Activated CD4-positive, alpha-beta T cell treated with anti-CD3 and anti-CD28 coated beads for 36 hours (primary cell): ENCODE measurements at regions of chr1 and their contacts with region 1.

Region 1: DNA sequence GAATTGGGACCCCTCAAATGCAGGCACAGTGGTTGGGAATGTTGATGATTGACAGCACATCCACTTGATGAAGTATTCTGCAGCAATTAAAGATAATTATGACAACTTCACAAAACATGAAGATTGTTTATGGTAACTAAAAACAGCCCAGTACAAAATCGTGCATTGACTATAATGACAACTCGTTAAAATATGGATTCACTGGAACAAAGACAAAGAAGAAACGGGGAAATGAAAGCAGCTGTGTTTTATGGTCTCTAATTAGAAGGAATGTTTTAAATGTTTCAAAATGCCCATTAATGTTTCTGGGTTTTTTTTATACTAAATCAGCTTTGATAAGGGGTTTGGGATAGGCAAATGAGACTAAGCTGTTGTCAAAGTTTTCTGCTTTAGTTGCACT is 36.1 kb downstream of the NIPAL3 start:
- DNase-seq: no peak
- ATAC-seq: no peak
- H3K4me3 Mint-ChIP-seq: no peak overlapping the region
- H3K27ac Mint-ChIP-seq: no peak overlapping the region
- H3K4me1 Mint-ChIP-seq: peaks cover 7% of the 10 kb centered on the region
- H3K27me3 Mint-ChIP-seq: no peaks in the 10 kb centered on the region

Region 2: DNA sequence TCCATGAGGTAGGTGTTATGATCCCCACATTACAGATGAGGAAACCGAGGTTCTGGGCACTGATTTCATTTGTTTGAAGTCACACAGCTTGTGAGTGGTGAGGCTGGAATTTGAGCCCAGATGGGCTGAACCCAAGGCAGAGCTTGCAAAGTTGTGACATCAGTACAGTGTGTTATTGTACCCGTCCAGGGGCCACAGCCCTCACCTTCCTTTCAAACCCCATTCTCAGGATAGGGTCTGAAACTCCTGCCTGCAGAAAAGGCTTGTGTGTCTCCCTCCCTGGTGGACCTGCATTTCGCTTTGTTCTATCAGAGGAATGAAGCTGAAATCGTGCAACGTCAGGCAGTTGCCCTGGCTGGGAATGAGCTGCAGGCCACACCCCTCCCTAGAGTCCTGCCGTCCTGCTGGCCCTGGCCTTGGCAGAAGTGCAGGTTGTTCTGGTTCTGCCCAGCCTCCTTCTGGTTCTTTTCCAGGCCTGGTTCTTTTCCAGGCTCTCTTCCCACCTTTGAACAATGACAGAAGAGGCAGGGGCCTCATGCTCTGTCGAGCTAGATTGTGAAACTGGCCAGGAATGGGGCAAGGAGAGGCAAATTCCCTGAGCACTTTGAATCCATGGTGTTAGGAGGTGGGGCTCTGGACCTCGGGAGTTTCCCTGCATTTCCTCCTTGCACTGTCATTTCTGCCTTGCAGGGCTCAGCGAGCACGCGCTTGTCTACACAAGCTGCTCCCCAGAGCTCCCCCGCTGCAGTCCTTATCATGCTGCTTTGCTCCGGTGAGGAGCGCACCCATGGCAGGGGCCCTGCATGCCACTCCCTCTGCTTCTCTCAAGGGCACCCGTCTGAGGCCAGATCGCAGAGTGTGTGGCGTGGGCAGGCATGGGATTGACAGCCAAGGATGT is 331.6 kb before region 1 on chr1:
- CTCF ChIA-PET with region 1: no interaction called
- POLR2A ChIA-PET with region 1: interaction called, 10 read pairs
- intact Hi-C with region 1: no loop called
- DNase-seq: no peak
- ATAC-seq: no peak
- H3K4me3 Mint-ChIP-seq: no peak overlapping the region
- H3K27ac Mint-ChIP-seq: no peak overlapping the region
- H3K4me1 Mint-ChIP-seq: no peaks in the 10 kb centered on the region
- H3K27me3 Mint-ChIP-seq: peaks cover 12% of the 10 kb centered on the region

Region 3: GRCh38 chr1:24727501-24728216 is 275.9 kb after region 1 on chr1:
- CTCF ChIA-PET with region 1: no interaction called
- POLR2A ChIA-PET with region 1: no interaction called
- intact Hi-C with region 1: no loop called
- DNase-seq: peak; percentile 46
- ATAC-seq: peak; percentile 77
- H3K4me3 Mint-ChIP-seq: no peak overlapping the region
- H3K27ac Mint-ChIP-seq: no peak overlapping the region
- H3K4me1 Mint-ChIP-seq: peaks cover 9% of the 10 kb centered on the region
- H3K27me3 Mint-ChIP-seq: no peaks in the 10 kb centered on the region